HCT116 (cell line): ENCODE measurements at regions of chr7 and their contacts with region 1.

Region 1: GRCh38 chr7:74544706-74545469 is 91.2 kb downstream of the GTF2IRD1 start:
- DNase-seq: peak; percentile 34
- ATAC-seq: peak; percentile 89
- H3K4me3 ChIP-seq: no peak overlapping the region
- H3K27ac ChIP-seq: no peak overlapping the region
- H3K4me1 ChIP-seq: no peaks in the 10 kb centered on the region
- H3K27me3 ChIP-seq: no peaks in the 10 kb centered on the region
- CTCF ChIP-seq: peak; percentile 42 to 77 (median 75); a peak in 5 of 6 replicates
- POLR2A ChIP-seq: no peak
- RAD21 ChIP-seq: peak; percentile 67

Region 2: GRCh38 chr7:74449809-74450397 is 95.0 kb before region 1 on chr7:
- CTCF ChIA-PET with region 1: no interaction called
- POLR2A ChIA-PET with region 1: no interaction called
- RAD21 ChIA-PET with region 1: no interaction called
- intact Hi-C with region 1: loop called (anchors 10 kb)
- DNase-seq: peak; percentile 48
- ATAC-seq: peak; percentile 46
- H3K4me3 ChIP-seq: no peak overlapping the region
- H3K27ac ChIP-seq: no peak overlapping the region
- H3K4me1 ChIP-seq: peaks cover 19 to 37% of the 10 kb centered on the region in 2 experiments
- H3K27me3 ChIP-seq: no peaks in the 10 kb centered on the region
- CTCF ChIP-seq: peak; percentile 64 to 92 (median 85); a peak in 5 of 6 replicates
- POLR2A ChIP-seq: no peak
- RAD21 ChIP-seq: peak; percentile 67

Region 3: GRCh38 chr7:75024922-75025321 is 480.0 kb after region 1 on chr7:
- CTCF ChIA-PET with region 1: no interaction called
- POLR2A ChIA-PET with region 1: no interaction called
- RAD21 ChIA-PET with region 1: no interaction called
- intact Hi-C with region 1: no loop called
- DNase-seq: no peak
- ATAC-seq: no peak
- H3K4me3 ChIP-seq: no peak overlapping the region
- H3K27ac ChIP-seq: no peak overlapping the region
- H3K4me1 ChIP-seq: no peaks in the 10 kb centered on the region
- H3K27me3 ChIP-seq: no peaks in the 10 kb centered on the region
- CTCF ChIP-seq: no peak
- POLR2A ChIP-seq: no peak
- RAD21 ChIP-seq: no peak